Activated CD8-positive, alpha-beta T cell treated with anti-CD3 and anti-CD28 coated beads for 36 hours (primary cell): ENCODE measurements at regions of chr15 and their contacts with region 1.

Region 1: DNA sequence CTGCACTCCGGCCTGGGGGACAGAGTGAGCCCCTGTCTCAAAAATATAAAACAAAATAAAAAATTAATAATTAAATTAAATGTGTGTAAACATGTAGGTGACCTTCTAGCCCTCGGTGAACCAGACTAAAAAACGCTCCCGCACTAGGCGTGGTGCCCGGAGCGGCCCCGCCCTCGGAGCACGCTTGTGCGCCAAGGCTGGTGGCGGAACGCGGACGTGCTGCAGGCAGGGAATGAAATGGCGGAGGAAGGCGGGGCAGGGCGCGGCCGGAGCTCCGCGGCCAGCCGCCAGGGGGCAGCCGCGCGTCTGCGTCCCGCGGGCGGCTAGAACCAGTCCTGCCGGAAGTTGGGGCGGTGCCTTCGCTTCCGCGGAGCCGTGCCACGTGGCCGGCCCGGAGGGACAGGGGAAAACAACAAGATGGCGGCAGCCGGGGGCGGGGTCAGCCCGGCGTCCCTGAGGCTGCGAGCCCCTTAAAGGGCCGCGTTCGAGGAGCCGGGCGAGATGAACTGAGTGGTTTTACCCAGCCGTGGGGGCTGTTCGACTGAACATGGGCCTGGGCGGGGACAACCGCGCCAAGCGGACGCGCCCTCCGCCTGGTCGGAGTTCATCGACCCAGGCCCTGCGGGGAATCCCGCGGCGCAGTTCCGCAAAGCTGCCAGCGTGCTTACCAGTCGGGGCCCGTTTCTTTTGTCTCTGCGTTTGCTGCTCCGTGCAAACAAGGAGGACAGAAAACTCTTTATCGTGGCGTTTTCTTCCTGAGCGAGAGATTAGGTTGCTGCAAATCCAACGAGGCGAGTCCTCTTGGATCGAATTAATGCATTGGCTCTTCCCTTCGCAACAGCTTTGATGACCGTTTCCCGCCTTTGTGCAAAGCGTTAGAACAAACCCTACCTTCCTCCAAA is 90.9 kb upstream of the CHD2 start:
- DNase-seq: peak; percentile 99
- ATAC-seq: peak; percentile 84
- H3K4me3 Mint-ChIP-seq: peak overlapping the region; percentile 82
- H3K27ac Mint-ChIP-seq: peak overlapping the region; percentile 99
- H3K4me1 Mint-ChIP-seq: peaks cover 40% of the 10 kb centered on the region
- H3K27me3 Mint-ChIP-seq: no peaks in the 10 kb centered on the region
- CTCF ChIP-seq: peak; percentile 92

Region 2: GRCh38 chr15:92714477-92715401 is 94.5 kb before region 1 on chr15:
- CTCF ChIA-PET with region 1: no interaction called
- POLR2A ChIA-PET with region 1: no interaction called
- intact Hi-C with region 1: no loop called
- DNase-seq: peak; percentile 83
- ATAC-seq: peak; percentile 92
- H3K4me3 Mint-ChIP-seq: peak overlapping the region; percentile 55
- H3K27ac Mint-ChIP-seq: no peak overlapping the region
- H3K4me1 Mint-ChIP-seq: peaks cover 5% of the 10 kb centered on the region
- H3K27me3 Mint-ChIP-seq: peaks cover 15% of the 10 kb centered on the region
- CTCF ChIP-seq: peak; percentile 98

Region 3: GRCh38 chr15:92772626-92773244 is 36.5 kb before region 1 on chr15:
- CTCF ChIA-PET with region 1: no interaction called
- POLR2A ChIA-PET with region 1: no interaction called
- intact Hi-C with region 1: no loop called
- DNase-seq: no peak
- ATAC-seq: no peak
- H3K4me3 Mint-ChIP-seq: no peak overlapping the region
- H3K27ac Mint-ChIP-seq: no peak overlapping the region
- H3K4me1 Mint-ChIP-seq: no peaks in the 10 kb centered on the region
- H3K27me3 Mint-ChIP-seq: no peaks in the 10 kb centered on the region
- CTCF ChIP-seq: no peak

Region 4: DNA sequence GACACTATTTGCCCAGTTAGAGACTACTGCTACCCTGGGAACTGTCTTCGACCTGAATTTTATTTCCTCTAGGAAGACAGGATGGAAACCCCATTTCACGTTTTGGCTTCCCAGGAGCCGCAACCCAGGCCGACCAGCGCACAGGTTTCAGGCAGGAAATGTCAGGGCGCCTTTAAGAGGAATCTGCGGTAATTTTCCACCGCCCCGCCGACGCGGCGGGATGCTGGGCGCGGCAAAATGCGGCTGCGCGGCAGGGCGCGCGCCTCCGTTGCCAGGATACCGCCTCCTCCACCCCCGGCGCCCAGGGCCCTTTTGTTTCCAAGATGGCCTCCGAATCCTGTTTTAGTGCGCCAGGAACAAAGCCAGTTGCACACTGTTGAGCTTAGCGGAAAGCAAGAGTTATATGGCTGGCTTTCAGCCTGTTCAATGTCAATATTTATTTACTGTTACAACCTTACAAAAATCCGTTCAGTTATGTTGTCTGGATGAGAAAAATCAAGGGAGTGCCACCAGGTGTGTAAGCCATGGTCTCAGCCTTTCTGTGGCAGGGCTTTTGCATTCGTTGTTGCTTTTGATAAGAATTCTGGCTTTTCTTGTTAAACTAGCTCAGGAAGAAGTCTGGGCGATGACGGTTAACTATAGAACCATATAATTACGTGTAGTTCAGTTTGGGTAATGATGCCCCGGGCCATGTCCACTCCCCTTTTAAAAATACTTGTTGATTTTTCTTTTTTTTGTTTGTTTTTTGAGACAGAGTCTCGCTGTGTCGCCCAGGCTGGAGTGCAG is 11.2 kb after region 1 on chr15:
- CTCF ChIA-PET with region 1: interaction called, 29 read pairs
- POLR2A ChIA-PET with region 1: interaction called, 34 read pairs
- intact Hi-C with region 1: no loop called
- DNase-seq: peak; percentile 88
- ATAC-seq: peak; percentile 75
- H3K4me3 Mint-ChIP-seq: peak overlapping the region; percentile 82
- H3K27ac Mint-ChIP-seq: peak overlapping the region; percentile 94
- H3K4me1 Mint-ChIP-seq: peaks cover 63% of the 10 kb centered on the region
- H3K27me3 Mint-ChIP-seq: no peaks in the 10 kb centered on the region
- CTCF ChIP-seq: no peak

Region 5: DNA sequence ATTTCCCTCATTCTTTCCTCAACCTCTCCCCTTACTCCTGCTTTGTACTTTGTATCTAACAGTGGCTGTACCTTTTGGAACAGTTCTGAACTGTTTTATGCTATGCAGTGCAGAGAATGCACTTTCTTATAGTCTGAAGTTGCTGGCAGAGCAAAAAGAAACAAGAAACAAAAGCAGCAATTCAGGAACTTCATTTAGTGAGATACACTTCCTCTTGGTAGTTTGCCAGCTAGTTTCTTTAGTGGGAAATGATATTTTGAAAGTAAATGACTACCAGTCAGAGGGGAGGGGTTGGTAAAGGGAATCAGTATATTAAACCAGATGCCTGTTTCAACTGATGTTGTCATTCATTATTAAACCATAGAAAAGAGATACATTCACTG is 35.9 kb after region 1 on chr15:
- CTCF ChIA-PET with region 1: interaction called, 3 read pairs
- POLR2A ChIA-PET with region 1: interaction called, 19 read pairs
- intact Hi-C with region 1: no loop called
- DNase-seq: no peak
- ATAC-seq: peak; percentile 28
- H3K4me3 Mint-ChIP-seq: peak overlapping the region; percentile 47
- H3K27ac Mint-ChIP-seq: peak overlapping the region; percentile 91
- H3K4me1 Mint-ChIP-seq: peaks cover 73% of the 10 kb centered on the region
- H3K27me3 Mint-ChIP-seq: no peaks in the 10 kb centered on the region
- CTCF ChIP-seq: no peak

Region 6: GRCh38 chr15:92903941-92904831 is 95.0 kb after region 1 on chr15:
- CTCF ChIA-PET with region 1: interaction called, 28 read pairs
- POLR2A ChIA-PET with region 1: interaction called, 124 read pairs
- intact Hi-C with region 1: loop called (anchors 2 kb)
- DNase-seq: peak; percentile 99
- ATAC-seq: peak; percentile 81
- H3K4me3 Mint-ChIP-seq: peak overlapping the region; percentile 99
- H3K27ac Mint-ChIP-seq: peak overlapping the region; percentile 100
- H3K4me1 Mint-ChIP-seq: peaks cover 49% of the 10 kb centered on the region
- H3K27me3 Mint-ChIP-seq: no peaks in the 10 kb centered on the region
- CTCF ChIP-seq: no peak

Region 7: GRCh38 chr15:92924216-92924615 is 115.0 kb after region 1 on chr15:
- CTCF ChIA-PET with region 1: interaction called, 33 read pairs
- POLR2A ChIA-PET with region 1: interaction called, 29 read pairs
- intact Hi-C with region 1: no loop called
- DNase-seq: no peak
- ATAC-seq: no peak
- H3K4me3 Mint-ChIP-seq: no peak overlapping the region
- H3K27ac Mint-ChIP-seq: peak overlapping the region; percentile 53
- H3K4me1 Mint-ChIP-seq: peaks cover 86% of the 10 kb centered on the region
- H3K27me3 Mint-ChIP-seq: no peaks in the 10 kb centered on the region
- CTCF ChIP-seq: no peak